HAP-1 (cell line): ENCODE measurements at regions of chr15 and their contacts with region 1.

Region 1: GRCh38 chr15:78093242-78094020 is 1.1 kb downstream of the SH2D7 start:
- DNase-seq: no peak
- H3K4me3 ChIP-seq: no peak overlapping the region
- H3K4me1 ChIP-seq: peaks cover 8% of the 10 kb centered on the region
- H3K27me3 ChIP-seq: no peaks in the 10 kb centered on the region

Region 2: GRCh38 chr15:78140292-78140691 is 46.9 kb after region 1 on chr15:
- in situ Hi-C with region 1: loop called (anchors 5 kb)
- DNase-seq: no peak
- H3K4me3 ChIP-seq: no peak overlapping the region
- H3K4me1 ChIP-seq: no peaks in the 10 kb centered on the region
- H3K27me3 ChIP-seq: no peaks in the 10 kb centered on the region